ENCODE measurements at regions of chr14 and their contacts with region 1.

Region 1: GRCh38 chr14:91323671-91324605 is 79.4 kb upstream of the GPR68 start:
- DNase-seq: peak; percentile 81
- H3K4me3 Mint-ChIP-seq: no peak overlapping the region
- H3K27ac Mint-ChIP-seq: no peak overlapping the region
- H3K4me1 Mint-ChIP-seq: peaks cover 5% of the 10 kb centered on the region
- H3K27me3 Mint-ChIP-seq: no peaks in the 10 kb centered on the region
- CTCF ChIP-seq: peak; percentile 88

Region 2: DNA sequence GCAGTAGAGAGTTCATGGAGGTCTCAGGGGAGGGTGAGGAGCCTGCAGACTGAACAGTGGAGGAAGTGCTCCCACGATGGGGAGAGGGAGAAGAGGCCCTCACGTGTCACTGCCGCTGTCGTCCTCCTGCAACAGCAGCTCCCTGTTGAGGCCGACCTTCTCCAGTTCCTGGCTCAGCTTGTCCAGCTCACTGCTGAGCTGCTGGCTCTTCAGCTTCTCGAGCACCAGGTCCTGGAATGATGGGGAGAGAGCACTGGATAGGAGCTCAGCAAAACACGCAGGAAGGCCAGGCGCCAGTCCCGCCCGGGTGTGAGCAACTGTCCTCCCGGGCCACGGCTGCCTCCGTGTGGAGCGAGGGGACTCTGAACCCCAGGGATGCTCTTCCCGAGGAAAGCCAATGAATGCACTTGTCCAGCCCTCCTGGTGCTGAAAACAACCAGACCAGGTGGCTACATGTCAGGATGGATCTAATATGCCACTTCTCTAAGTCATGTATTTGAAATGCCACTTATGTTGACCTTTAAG is 14.1 kb before region 1 on chr14:
- CTCF ChIA-PET with region 1: interaction called, 12 read pairs
- POLR2A ChIA-PET with region 1: no interaction called
- intact Hi-C with region 1: no loop called
- DNase-seq: no peak
- H3K4me3 Mint-ChIP-seq: no peak overlapping the region
- H3K27ac Mint-ChIP-seq: no peak overlapping the region
- H3K4me1 Mint-ChIP-seq: no peaks in the 10 kb centered on the region
- H3K27me3 Mint-ChIP-seq: no peaks in the 10 kb centered on the region
- CTCF ChIP-seq: no peak

Region 3: DNA sequence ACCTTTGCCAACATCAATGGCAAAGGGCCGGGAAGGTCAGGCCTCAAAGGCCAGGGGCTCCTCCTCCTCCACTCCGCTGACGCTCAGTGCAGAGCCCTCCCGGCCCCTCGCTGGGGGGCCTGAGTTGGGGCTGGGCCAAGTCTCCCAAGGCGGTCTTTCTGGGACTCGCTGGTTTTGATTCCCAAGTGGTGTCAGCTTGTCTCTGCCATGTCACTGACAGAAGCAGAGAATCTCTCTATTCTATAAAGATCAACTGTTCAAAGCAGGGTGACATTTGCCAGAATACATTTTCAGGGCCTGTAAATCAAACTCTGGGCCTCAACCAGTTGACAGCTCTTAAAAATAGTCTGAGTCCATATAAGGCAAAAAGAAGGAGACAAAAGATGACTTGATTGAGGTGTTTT is 17.8 kb after region 1 on chr14:
- CTCF ChIA-PET with region 1: interaction called, 24 read pairs
- POLR2A ChIA-PET with region 1: interaction called, 3 read pairs
- intact Hi-C with region 1: no loop called
- DNase-seq: no peak
- H3K4me3 Mint-ChIP-seq: no peak overlapping the region
- H3K27ac Mint-ChIP-seq: no peak overlapping the region
- H3K4me1 Mint-ChIP-seq: no peaks in the 10 kb centered on the region
- H3K27me3 Mint-ChIP-seq: no peaks in the 10 kb centered on the region
- CTCF ChIP-seq: no peak

Region 4: GRCh38 chr14:91350813-91351511 is 27.0 kb after region 1 on chr14:
- CTCF ChIA-PET with region 1: interaction called, 41 read pairs
- POLR2A ChIA-PET with region 1: interaction called, 3 read pairs
- intact Hi-C with region 1: no loop called
- DNase-seq: no peak
- H3K4me3 Mint-ChIP-seq: no peak overlapping the region
- H3K27ac Mint-ChIP-seq: no peak overlapping the region
- H3K4me1 Mint-ChIP-seq: peaks cover 12% of the 10 kb centered on the region
- H3K27me3 Mint-ChIP-seq: no peaks in the 10 kb centered on the region
- CTCF ChIP-seq: no peak

Region 5: DNA sequence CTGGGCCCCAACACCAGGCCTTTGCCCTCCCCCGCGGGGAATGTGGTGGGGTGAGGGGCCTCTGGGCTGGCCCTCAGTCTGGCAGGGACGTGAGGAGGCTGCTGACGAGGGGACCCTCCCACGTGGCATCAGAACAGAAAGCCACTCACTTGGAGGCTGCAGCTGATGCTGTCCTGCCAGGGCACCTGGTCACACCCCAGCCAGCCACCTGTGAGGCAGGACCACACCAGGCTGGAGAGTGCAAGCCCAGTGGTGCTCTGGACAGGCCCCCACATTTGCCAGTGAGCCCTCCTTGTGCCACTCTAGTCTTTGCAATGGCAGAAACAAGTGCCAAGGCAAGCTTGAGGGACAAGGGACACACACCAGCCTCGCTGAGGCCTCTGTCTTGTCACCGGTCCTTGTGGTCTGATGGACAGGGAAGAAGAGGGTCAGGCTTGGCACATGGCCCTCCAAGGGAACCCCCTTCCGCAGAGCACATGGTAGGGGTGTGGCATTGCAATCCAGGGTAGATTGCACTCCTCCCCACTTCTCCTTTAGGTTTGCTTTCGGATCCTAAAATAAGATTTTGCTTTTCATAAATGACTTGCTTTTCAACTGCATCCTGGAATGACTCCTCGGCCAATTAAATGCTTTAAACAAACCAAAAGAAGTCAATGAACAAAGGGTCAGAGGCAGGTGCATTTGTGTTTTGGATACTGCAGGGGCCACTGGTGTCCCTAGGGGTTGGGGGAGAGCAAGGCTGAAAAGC is 40.0 kb after region 1 on chr14:
- CTCF ChIA-PET with region 1: interaction called, 41 read pairs
- POLR2A ChIA-PET with region 1: interaction called, 6 read pairs
- intact Hi-C with region 1: loop called (anchors 5 kb)
- DNase-seq: no peak
- H3K4me3 Mint-ChIP-seq: no peak overlapping the region
- H3K27ac Mint-ChIP-seq: no peak overlapping the region
- H3K4me1 Mint-ChIP-seq: peaks cover 39% of the 10 kb centered on the region
- H3K27me3 Mint-ChIP-seq: no peaks in the 10 kb centered on the region
- CTCF ChIP-seq: no peak

Region 6: GRCh38 chr14:91396959-91397815 is 73.2 kb after region 1 on chr14:
- CTCF ChIA-PET with region 1: interaction called, 16 read pairs
- POLR2A ChIA-PET with region 1: no interaction called
- intact Hi-C with region 1: no loop called
- DNase-seq: peak; percentile 13
- H3K4me3 Mint-ChIP-seq: peak overlapping the region; percentile 47
- H3K27ac Mint-ChIP-seq: peak overlapping the region; percentile 99
- H3K4me1 Mint-ChIP-seq: peaks cover 36% of the 10 kb centered on the region
- H3K27me3 Mint-ChIP-seq: no peaks in the 10 kb centered on the region
- CTCF ChIP-seq: no peak